CD8-positive, alpha-beta T cell (primary cell): ENCODE measurements at regions of chr3 and their contacts with region 1.

Region 1: GRCh38 chr3:179147873-179148615 is at the start of gene PIK3CA:
- DNase-seq: peak; percentile 87 to 99 (median 92)
- ATAC-seq: peak; percentile 75
- H3K4me3 ChIP-seq: peak within 1 kb of the TSS; percentile 77 to 91
- H3K4me3 Mint-ChIP-seq: peak within 1 kb of the TSS; percentile 93
- H3K27ac ChIP-seq: peak within 1 kb of the TSS; percentile 93 to 94
- H3K27ac Mint-ChIP-seq: peak within 1 kb of the TSS; percentile 99
- H3K4me1 ChIP-seq: peaks cover 32% of the 10 kb centered on the region
- H3K4me1 Mint-ChIP-seq: peaks cover 39% of the 10 kb centered on the region
- H3K27me3 ChIP-seq: no peaks in the 10 kb centered on the region
- H3K27me3 Mint-ChIP-seq: no peaks in the 10 kb centered on the region
- CTCF ChIP-seq: no peak
- total RNA-seq, gene PIK3CA: 60.3 to 61.8 TPM

Region 2: DNA sequence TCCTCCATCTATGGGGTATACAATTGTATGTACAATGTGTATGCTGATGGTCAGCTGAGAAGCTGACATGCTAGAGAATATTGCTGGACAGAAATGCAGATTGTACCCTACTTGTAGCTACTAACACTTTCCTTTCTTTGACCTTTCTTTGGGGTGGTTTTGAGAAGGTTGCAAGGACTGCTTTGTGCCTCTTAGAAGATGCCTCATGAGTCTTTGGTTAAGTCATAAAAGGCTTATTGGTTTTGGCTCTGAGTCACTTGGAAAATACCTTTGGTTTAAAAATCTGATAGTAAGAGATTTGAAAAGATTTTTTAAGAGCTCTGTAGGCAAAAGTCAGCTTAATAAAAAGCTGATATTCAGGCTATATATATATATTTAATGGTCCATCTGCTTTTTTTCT is 147.9 kb before region 1 on chr3:
- CTCF ChIA-PET with region 1: no interaction called
- POLR2A ChIA-PET with region 1: no interaction called
- intact Hi-C with region 1: no loop called
- DNase-seq: no peak
- ATAC-seq: no peak
- H3K4me3 ChIP-seq: no peak overlapping the region
- H3K4me3 Mint-ChIP-seq: no peak overlapping the region
- H3K27ac ChIP-seq: no peak overlapping the region
- H3K27ac Mint-ChIP-seq: no peak overlapping the region
- H3K4me1 ChIP-seq: no peaks in the 10 kb centered on the region
- H3K4me1 Mint-ChIP-seq: no peaks in the 10 kb centered on the region
- H3K27me3 ChIP-seq: no peaks in the 10 kb centered on the region
- H3K27me3 Mint-ChIP-seq: peaks cover 3% of the 10 kb centered on the region
- CTCF ChIP-seq: no peak

Region 3: GRCh38 chr3:179071550-179072397 is 76.3 kb before region 1 on chr3 and contains the start of gene ZMAT3:
- CTCF ChIA-PET with region 1: no interaction called
- POLR2A ChIA-PET with region 1: interaction called, 23 read pairs
- intact Hi-C with region 1: loop called (anchors 1 to 2 kb)
- DNase-seq: peak; percentile 65 to 92 (median 85)
- ATAC-seq: peak; percentile 81
- H3K4me3 ChIP-seq: peak within 1 kb of the TSS; percentile 76 to 88
- H3K4me3 Mint-ChIP-seq: peak within 1 kb of the TSS; percentile 98
- H3K27ac ChIP-seq: peak within 1 kb of the TSS; percentile 80 to 83
- H3K27ac Mint-ChIP-seq: peak within 1 kb of the TSS; percentile 93
- H3K4me1 ChIP-seq: peaks cover 17% of the 10 kb centered on the region
- H3K4me1 Mint-ChIP-seq: peaks cover 61% of the 10 kb centered on the region
- H3K27me3 ChIP-seq: no peaks in the 10 kb centered on the region
- H3K27me3 Mint-ChIP-seq: no peaks in the 10 kb centered on the region
- CTCF ChIP-seq: no peak
- total RNA-seq, gene ZMAT3: 8.7 to 9.4 TPM

Region 4: DNA sequence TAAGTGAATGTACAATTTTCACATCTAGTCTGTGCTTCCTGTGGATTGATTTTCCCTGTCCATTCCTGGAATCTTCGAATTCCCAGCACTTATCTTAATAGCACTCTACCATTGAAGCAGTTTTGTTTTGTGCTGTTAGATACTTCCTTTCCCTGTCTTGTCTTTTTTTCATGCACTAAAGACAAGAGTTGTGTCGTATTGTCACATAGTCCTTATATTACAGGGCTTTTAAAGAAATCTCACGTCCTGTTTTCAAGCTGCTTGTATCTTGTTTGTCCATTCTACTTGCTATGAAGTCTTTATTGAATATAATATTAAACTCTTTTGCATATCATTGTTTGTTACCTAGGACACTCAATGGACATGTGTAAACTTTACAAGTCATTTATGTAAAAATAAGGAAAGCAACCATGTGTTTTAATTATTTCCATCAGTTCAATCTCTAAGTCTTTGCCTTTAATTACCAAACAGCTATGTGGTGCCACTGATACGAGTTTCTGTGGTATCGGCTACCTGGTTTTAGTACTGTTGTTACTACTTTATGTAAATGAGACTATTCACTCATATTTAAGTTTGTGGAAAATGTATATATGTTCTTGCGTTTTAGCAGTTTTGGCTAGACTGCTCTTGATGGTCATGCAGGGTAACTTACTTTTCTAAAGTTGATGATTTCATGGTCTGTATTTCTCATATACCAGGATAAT is 10.4 kb after region 1 on chr3:
- CTCF ChIA-PET with region 1: interaction called, 3 read pairs
- POLR2A ChIA-PET with region 1: interaction called, 15 read pairs
- intact Hi-C with region 1: loop called in 1 of 2 experiments (anchors 1 kb)
- DNase-seq: no peak
- ATAC-seq: no peak
- H3K4me3 ChIP-seq: no peak overlapping the region
- H3K4me3 Mint-ChIP-seq: no peak overlapping the region
- H3K27ac ChIP-seq: no peak overlapping the region
- H3K27ac Mint-ChIP-seq: no peak overlapping the region
- H3K4me1 ChIP-seq: peaks cover 21% of the 10 kb centered on the region
- H3K4me1 Mint-ChIP-seq: peaks cover 73% of the 10 kb centered on the region
- H3K27me3 ChIP-seq: no peaks in the 10 kb centered on the region
- H3K27me3 Mint-ChIP-seq: no peaks in the 10 kb centered on the region
- CTCF ChIP-seq: no peak

Region 5: GRCh38 chr3:179260949-179261765 is 113.1 kb after region 1 on chr3:
- CTCF ChIA-PET with region 1: no interaction called
- POLR2A ChIA-PET with region 1: interaction called, 4 read pairs
- intact Hi-C with region 1: loop called (anchors 1 kb)
- DNase-seq: peak; percentile 34 to 80 (median 62)
- ATAC-seq: peak; percentile 97
- H3K4me3 ChIP-seq: peak overlapping the region; percentile 49 to 54
- H3K4me3 Mint-ChIP-seq: peak overlapping the region; percentile 83
- H3K27ac ChIP-seq: peak overlapping the region in 1 of 2 experiments; percentile 20
- H3K27ac Mint-ChIP-seq: peak overlapping the region; percentile 24
- H3K4me1 ChIP-seq: peaks cover 6% of the 10 kb centered on the region
- H3K4me1 Mint-ChIP-seq: peaks cover 24% of the 10 kb centered on the region
- H3K27me3 ChIP-seq: no peaks in the 10 kb centered on the region
- H3K27me3 Mint-ChIP-seq: no peaks in the 10 kb centered on the region
- CTCF ChIP-seq: no peak

Region 6: GRCh38 chr3:179347345-179348194 is 199.5 kb after region 1 on chr3 and contains the start of gene MFN1:
- CTCF ChIA-PET with region 1: interaction called, 3 read pairs
- POLR2A ChIA-PET with region 1: interaction called, 12 read pairs
- intact Hi-C with region 1: loop called in 1 of 2 experiments (anchors 1 kb)
- DNase-seq: peak; percentile 72 to 95 (median 88)
- ATAC-seq: peak; percentile 97
- H3K4me3 ChIP-seq: peak within 1 kb of the TSS; percentile 89 to 94
- H3K4me3 Mint-ChIP-seq: peak within 1 kb of the TSS; percentile 100
- H3K27ac ChIP-seq: peak within 1 kb of the TSS; percentile 68 to 77
- H3K27ac Mint-ChIP-seq: peak within 1 kb of the TSS; percentile 99
- H3K4me1 ChIP-seq: peaks cover 6% of the 10 kb centered on the region
- H3K4me1 Mint-ChIP-seq: peaks cover 35% of the 10 kb centered on the region
- H3K27me3 ChIP-seq: no peaks in the 10 kb centered on the region
- H3K27me3 Mint-ChIP-seq: no peaks in the 10 kb centered on the region
- CTCF ChIP-seq: no peak
- total RNA-seq, gene MFN1: 21.9 to 26.7 TPM

Region 7: DNA sequence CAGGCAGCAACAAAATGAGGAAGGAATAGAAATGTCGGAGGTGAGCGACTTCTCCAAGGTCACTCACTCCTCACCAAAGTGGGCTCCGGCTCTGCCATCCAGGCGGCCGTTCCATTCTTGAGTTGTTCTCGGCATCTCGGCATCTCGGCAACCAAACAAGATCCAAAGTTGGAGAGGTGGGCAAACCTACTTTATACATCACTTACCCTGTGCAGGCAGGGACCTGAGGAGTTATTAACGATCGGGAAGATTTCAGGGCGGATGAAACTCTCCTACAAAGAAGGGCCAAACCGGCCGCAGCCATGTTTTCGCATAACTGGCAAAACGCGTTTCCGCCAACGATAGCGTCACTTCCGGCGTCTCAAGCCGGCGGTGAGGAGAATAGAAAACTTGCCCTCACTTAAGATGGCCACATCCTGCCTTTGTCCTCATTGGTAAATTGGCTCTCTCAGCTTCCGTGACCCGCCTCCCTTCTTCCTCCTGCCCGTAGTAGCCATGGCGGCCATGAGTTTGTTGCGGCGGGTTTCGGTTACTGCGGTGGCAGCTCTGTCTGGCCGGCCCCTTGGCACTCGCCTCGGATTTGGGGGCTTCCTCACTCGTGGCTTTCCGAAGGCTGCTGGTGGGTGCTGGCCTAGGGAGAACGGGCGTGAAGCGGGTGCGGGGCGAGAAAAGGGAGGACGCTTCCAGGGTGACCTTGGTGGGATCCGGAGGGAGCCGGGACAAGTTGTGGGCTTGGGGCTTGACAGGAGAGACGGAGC is 456.5 kb after region 1 on chr3 and contains the starts of genes MRPL47 and NDUFB5:
- CTCF ChIA-PET with region 1: interaction called, 3 read pairs
- POLR2A ChIA-PET with region 1: no interaction called
- intact Hi-C with region 1: loop called (anchors 1 to 5 kb)
- DNase-seq: peak; percentile 81 to 98 (median 93)
- ATAC-seq: peak; percentile 99
- H3K4me3 ChIP-seq: peak within 1 kb of the TSS; percentile 82 to 96
- H3K4me3 Mint-ChIP-seq: peak within 1 kb of the TSS; percentile 97
- H3K27ac ChIP-seq: peak within 1 kb of the TSS; percentile 93 to 98
- H3K27ac Mint-ChIP-seq: peak within 1 kb of the TSS; percentile 100
- H3K4me1 ChIP-seq: peaks cover 13% of the 10 kb centered on the region
- H3K4me1 Mint-ChIP-seq: peaks cover 55% of the 10 kb centered on the region
- H3K27me3 ChIP-seq: no peaks in the 10 kb centered on the region
- H3K27me3 Mint-ChIP-seq: no peaks in the 10 kb centered on the region
- CTCF ChIP-seq: no peak
- total RNA-seq, gene MRPL47: 36.4 to 37.8 TPM
- total RNA-seq, gene NDUFB5: 21.0 to 25.6 TPM